Posterior vena cava (tissue), 2 donors: ENCODE measurements at regions of chr22 and their contacts with region 1.

Region 1: DNA sequence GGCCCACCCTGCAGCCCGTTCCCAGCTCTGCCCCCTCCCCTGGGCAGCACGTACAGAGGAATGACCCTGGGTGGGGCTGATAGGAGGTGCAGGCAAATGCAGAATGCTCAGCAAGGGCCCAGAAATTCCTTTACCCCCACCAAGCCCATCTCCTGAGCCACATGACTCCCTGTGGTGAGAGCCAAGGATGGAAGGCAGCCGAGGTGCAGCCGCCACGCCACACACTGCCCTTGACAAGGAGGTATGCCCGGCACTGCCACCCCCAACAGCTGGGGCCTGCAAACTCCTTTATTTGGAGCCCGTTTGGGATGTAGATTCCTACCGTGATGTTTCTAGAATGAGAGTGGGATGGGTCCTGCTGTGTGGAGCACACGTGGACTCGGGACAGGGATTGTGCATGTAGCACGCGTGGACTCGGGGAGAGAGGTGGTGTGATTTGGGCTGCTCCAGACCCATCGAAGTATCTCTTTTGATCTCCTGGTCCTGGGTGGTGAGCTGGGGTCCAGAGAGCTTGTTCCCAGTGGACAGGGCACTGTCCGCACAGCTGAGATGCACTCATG is 12.9 kb downstream of the GTSE1 start:
- DNase-seq: no peak

Region 2: GRCh38 chr22:45994491-45995404 is 314.9 kb before region 1 on chr22:
- intact Hi-C with region 1: loop called (anchors 5 kb)
- DNase-seq: peak; percentile 95

Region 3: GRCh38 chr22:46122511-46122971 is 187.1 kb before region 1 on chr22:
- intact Hi-C with region 1: loop called (anchors 5 kb)
- DNase-seq: peak; percentile 93

Region 4: GRCh38 chr22:46129390-46130041 is 180.1 kb before region 1 on chr22:
- intact Hi-C with region 1: loop called (anchors 5 kb)
- DNase-seq: peak; percentile 93

Region 5: GRCh38 chr22:46280999-46281623 is 28.5 kb before region 1 on chr22:
- intact Hi-C with region 1: no loop called
- DNase-seq: peak; percentile 74

Region 6: DNA sequence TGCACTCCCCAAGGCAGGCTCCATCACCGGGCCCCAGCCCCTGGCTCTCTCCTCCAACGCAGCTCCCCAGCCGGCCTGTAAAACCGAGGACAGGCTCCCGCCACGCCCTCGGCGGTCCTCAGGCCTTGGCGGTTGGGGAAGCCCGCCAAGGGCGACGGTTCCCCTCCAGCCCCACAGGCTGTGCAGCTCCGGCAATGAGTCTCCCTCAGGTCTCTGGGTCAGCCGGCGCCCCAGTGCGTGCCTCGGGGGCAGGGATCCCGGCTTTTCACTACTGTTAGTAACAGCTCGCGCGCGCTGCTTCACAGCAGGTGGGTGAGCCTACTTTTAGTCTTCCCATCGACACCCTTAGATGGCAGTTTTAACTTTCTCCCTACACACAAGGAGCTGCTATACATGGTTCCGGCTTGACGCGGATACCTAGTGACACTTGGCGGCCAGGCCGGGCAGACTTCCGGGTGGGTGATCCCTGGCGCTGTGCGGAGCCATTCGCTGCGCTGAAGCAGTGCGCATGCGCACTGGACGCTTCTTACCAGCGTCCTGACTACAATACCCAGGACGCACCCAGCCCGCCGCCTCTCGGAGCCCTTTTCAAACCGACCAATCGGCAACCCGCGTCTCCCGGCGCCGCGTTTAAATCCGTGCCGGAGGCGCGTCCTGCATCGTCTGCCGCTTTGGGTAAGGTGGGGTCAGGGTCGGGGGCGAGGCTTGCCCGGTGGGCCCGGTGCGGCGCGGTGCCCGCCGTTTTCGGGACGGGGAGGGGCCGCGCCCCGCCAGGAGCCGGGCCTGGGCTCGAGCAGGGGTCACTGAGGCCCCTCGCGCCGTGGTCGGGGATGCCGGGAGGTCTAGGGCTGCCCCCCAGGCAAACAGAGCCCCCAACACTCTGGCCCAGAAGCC is 13.1 kb before region 1 on chr22 and contains the start of gene GTSE1:
- intact Hi-C with region 1: no loop called
- DNase-seq: peak; percentile 100
- total RNA-seq, gene GTSE1: 0.19 to 0.48 TPM

Region 7: DNA sequence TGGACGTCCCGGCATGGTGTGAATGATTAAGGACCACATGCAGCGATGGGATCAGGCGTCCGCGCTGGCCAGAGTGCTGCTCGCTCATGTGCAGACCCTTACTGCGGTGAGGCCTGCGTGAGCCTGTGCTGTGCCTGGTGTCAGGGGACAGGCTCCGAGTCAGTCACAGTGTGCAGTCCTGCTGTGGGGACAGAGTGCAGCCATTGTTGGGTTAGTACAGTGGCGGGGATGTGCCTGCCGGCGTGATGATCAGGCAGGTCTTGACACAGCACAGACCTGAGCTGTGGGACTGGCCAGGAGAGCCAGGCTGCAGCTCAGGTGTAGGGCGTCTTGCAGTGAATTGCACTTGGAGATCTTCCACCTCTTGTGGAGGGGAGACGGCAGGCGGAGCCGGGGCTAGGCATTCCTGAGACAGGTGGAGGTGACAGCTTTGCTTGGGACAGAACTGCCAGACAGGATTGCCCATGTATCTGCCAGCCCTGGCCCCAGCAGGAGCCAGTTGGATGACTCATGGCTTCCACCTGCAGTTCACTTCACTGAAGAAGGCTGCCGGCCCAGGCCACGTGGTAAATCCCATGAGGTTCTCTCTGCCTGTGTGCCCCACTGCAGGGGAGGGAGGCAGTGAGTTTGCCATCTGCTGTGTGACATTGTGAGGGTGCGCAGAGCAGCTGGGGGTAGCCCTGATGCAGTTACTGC is 43.2 kb after region 1 on chr22:
- intact Hi-C with region 1: no loop called
- DNase-seq: no peak